CD8-positive, alpha-beta T cell (primary cell): ENCODE measurements at regions of chr6 and their contacts with region 1.

Region 1: GRCh38 chr6:36442671-36443470 is at the starts of genes KCTD20 and PXT1:
- DNase-seq: peak; percentile 66 to 92 (median 86)
- ATAC-seq: peak; percentile 71
- H3K4me3 ChIP-seq: peak within 1 kb of the TSS; percentile 64 to 97
- H3K4me3 Mint-ChIP-seq: peak within 1 kb of the TSS; percentile 97
- H3K27ac ChIP-seq: peak within 1 kb of the TSS; percentile 72 to 90
- H3K27ac Mint-ChIP-seq: peak within 1 kb of the TSS; percentile 99
- H3K4me1 ChIP-seq: peaks cover 31% of the 10 kb centered on the region
- H3K4me1 Mint-ChIP-seq: peaks cover 49% of the 10 kb centered on the region
- H3K27me3 ChIP-seq: no peaks in the 10 kb centered on the region
- H3K27me3 Mint-ChIP-seq: no peaks in the 10 kb centered on the region
- CTCF ChIP-seq: no peak
- total RNA-seq, gene KCTD20: 42.5 to 49.1 TPM
- total RNA-seq, gene PXT1: 0.56 to 0.95 TPM

Region 2: GRCh38 chr6:34791701-34792235 is 1651.1 kb before region 1 on chr6 and contains the start of gene BLTP3A:
- CTCF ChIA-PET with region 1: no interaction called
- POLR2A ChIA-PET with region 1: no interaction called
- intact Hi-C with region 1: loop called in 1 of 2 experiments (anchors 5 kb)
- DNase-seq: peak; percentile 48 to 91 (median 71)
- ATAC-seq: peak; percentile 90
- H3K4me3 ChIP-seq: peak within 1 kb of the TSS; percentile 75 to 95
- H3K4me3 Mint-ChIP-seq: peak within 1 kb of the TSS; percentile 99
- H3K27ac ChIP-seq: peak within 1 kb of the TSS; percentile 75 to 79
- H3K27ac Mint-ChIP-seq: peak within 1 kb of the TSS; percentile 94
- H3K4me1 ChIP-seq: peaks cover 12% of the 10 kb centered on the region
- H3K4me1 Mint-ChIP-seq: peaks cover 29% of the 10 kb centered on the region
- H3K27me3 ChIP-seq: no peaks in the 10 kb centered on the region
- H3K27me3 Mint-ChIP-seq: no peaks in the 10 kb centered on the region
- CTCF ChIP-seq: no peak
- total RNA-seq, gene BLTP3A: 8.8 to 9.3 TPM

Region 3: DNA sequence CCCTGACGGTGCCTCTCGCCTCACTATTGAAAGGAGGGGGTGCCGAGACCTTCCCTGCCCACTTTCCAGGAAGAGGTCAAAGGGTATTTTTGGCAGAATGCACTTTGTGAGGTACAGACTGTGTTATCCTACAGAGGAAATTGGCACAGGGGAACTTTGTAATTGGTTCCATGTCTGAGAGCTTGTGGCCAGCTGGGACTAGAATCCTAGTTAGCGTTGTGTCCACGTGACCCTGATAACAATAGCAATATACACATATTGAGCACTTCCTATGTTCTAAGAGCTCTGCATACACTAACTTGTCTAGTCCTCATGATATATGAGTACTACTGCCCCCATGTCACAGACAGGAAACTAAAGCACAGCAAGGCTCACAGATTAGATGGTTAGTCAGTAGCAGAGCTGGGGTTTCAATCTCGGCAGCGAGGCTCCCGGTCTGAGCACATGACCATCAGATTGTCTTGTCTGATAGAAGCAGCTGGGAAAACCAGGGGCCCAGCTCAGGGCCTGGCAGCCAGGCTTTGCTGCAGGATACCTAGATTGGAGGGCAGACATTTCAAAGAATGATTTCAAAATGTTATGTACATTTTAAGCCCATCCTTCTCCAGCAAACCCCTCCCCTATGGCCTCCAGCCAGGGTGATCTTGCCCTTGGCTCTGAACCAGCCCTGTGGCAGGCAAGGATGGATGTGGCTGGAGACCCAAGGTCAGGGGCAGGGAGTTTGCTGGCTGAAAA is 311.2 kb before region 1 on chr6:
- CTCF ChIA-PET with region 1: no interaction called
- POLR2A ChIA-PET with region 1: no interaction called
- intact Hi-C with region 1: loop called in 1 of 2 experiments (anchors 5 kb)
- DNase-seq: peak in 8 of 9 experiments; percentile 22 to 78 (median 48)
- ATAC-seq: peak; percentile 71
- H3K4me3 ChIP-seq: peak overlapping the region; percentile 79 to 89
- H3K4me3 Mint-ChIP-seq: peak overlapping the region; percentile 88
- H3K27ac ChIP-seq: peak overlapping the region; percentile 81 to 92
- H3K27ac Mint-ChIP-seq: peak overlapping the region; percentile 95
- H3K4me1 ChIP-seq: peaks cover 48% of the 10 kb centered on the region
- H3K4me1 Mint-ChIP-seq: peaks cover 54% of the 10 kb centered on the region
- H3K27me3 ChIP-seq: no peaks in the 10 kb centered on the region
- H3K27me3 Mint-ChIP-seq: no peaks in the 10 kb centered on the region
- CTCF ChIP-seq: no peak

Region 4: DNA sequence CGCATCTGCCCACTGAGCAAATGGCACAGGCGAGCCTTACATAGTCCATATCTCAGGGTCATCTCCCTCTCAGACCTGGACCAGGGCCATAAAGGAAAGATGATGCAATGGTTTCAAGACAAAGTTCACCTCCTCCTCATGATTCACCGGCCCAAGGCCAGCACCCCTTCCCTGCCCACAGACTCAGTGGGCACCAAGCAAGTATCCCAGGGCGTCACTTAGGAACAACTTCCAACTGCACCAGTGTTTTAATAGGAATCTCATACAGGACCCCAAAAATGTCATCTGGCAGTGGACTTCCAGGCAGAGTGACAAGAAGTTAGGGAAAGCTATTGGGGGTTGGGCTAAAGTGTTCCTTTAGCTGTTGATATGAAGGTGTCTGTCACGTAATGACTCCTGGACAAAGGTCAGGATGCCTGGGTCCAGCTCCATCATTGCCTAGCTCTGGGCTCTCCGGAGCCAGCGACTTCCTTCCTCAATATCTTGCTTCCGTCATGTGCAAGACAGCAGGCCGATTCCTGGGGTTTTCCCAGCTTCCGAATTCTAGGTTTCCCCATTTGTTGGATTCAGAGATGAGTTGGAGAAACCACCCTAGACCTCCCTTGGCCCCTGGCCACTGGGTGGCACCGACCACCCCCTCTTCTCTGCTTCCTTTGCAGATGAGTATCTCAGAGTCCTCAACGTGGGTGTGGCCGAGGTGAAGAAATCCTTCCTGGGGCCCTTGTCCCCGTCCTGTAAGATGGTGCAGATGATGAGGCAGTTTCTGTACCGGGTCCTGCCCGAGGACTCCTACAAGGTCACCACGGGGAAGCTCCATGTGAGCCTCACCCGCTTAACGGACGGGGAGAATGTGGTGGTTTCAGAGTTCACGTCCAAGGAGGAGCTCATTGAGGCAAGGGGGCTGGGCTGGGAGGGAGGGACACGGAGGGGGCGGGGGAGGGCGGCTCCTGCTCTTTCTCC is 151.9 kb before region 1 on chr6:
- CTCF ChIA-PET with region 1: no interaction called
- POLR2A ChIA-PET with region 1: no interaction called
- intact Hi-C with region 1: no loop called
- DNase-seq: peak in 1 of 9 experiments; percentile 43
- ATAC-seq: no peak
- H3K4me3 ChIP-seq: no peak overlapping the region
- H3K4me3 Mint-ChIP-seq: no peak overlapping the region
- H3K27ac ChIP-seq: no peak overlapping the region
- H3K27ac Mint-ChIP-seq: no peak overlapping the region
- H3K4me1 ChIP-seq: peaks cover 6% of the 10 kb centered on the region
- H3K4me1 Mint-ChIP-seq: peaks cover 6% of the 10 kb centered on the region
- H3K27me3 ChIP-seq: no peaks in the 10 kb centered on the region
- H3K27me3 Mint-ChIP-seq: peaks cover 7% of the 10 kb centered on the region
- CTCF ChIP-seq: no peak

Region 5: DNA sequence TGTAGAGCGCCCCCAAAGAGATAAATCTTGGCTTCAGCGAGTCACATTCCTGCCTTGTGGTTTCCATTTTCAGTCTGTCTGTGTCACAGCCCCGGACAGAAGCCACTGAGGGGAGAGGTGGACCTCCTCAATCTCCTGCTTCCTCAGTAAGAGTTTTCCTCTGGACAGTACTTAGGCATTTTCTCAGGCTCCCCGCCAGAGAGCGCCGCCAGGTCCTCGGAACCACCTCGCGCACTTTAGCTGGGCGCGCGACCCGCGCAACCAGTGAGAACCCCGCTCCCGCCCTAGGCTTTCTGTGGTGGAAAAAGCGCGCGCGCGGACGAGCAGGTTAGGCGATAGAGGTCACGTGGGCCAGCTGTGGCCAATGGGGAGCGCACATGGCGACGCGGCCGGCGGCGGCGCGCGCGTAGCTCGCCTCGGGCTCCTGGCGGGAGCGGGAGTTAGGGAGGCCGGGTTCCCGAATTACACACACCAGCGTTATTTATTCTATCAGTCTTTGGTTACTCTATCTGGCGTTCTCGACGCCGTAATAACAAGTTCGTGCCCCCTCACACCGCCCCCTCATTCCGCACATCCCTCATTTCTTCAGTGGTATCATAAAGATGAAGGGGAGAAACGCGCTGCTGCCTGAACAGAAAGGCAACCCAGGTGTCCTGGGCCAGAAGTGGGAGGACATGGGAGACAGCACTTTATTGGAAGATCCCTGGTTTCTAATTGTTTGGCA is 19.6 kb before region 1 on chr6:
- CTCF ChIA-PET with region 1: interaction called, 6 read pairs
- POLR2A ChIA-PET with region 1: interaction called, 10 read pairs
- intact Hi-C with region 1: loop called (anchors 1 kb)
- DNase-seq: peak; percentile 96 to 99 (median 98)
- ATAC-seq: peak; percentile 96
- H3K4me3 ChIP-seq: peak overlapping the region; percentile 63 to 74
- H3K4me3 Mint-ChIP-seq: peak overlapping the region; percentile 95
- H3K27ac ChIP-seq: peak overlapping the region; percentile 60 to 80
- H3K27ac Mint-ChIP-seq: peak overlapping the region; percentile 95
- H3K4me1 ChIP-seq: peaks cover 12% of the 10 kb centered on the region
- H3K4me1 Mint-ChIP-seq: peaks cover 11% of the 10 kb centered on the region
- H3K27me3 ChIP-seq: no peaks in the 10 kb centered on the region
- H3K27me3 Mint-ChIP-seq: no peaks in the 10 kb centered on the region
- CTCF ChIP-seq: peak; percentile 74

Region 6: DNA sequence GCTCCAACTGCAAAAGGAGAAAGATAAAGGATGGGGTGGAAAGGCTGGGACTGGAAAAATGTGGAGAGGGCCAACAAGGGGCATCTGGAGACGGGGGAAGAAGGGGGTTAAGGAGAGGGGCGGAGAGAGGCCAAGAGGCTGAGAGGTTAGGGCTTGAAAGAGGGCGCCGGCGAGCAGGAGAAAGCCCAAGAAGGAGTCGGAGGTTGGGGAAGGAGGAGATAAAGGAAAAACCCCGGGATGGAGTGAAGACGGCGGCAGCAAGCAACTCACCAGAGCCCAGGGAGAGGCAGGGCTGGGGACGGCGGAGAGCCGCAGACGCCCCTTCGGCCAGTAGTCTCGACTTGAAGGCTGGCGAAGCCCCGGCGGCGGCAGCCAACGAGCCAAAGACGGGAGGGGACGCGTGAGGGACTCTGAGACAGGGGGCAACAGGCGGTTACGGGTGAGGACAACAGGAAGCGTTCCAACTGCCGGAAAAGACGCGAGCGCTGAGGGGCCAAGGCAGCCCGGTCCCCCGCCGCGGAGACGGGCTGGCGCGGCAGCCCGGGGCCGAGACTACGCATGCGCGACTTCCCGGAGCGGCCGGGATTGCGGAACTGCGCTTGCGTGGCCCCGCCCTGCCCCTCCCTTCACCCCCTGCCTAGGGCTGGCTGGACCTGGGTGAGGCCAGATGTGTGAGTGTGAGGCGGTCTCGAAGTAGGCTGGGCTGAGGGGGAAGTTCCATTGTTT is 104.2 kb after region 1 on chr6 and contains the start of gene STK38:
- CTCF ChIA-PET with region 1: no interaction called
- POLR2A ChIA-PET with region 1: interaction called, 8 read pairs
- intact Hi-C with region 1: loop called (anchors 2 to 5 kb)
- DNase-seq: peak; percentile 85 to 98 (median 94)
- ATAC-seq: peak; percentile 72
- H3K4me3 ChIP-seq: peak within 1 kb of the TSS; percentile 82 to 85
- H3K4me3 Mint-ChIP-seq: peak within 1 kb of the TSS; percentile 99
- H3K27ac ChIP-seq: peak within 1 kb of the TSS; percentile 92 to 94
- H3K27ac Mint-ChIP-seq: peak within 1 kb of the TSS; percentile 99
- H3K4me1 ChIP-seq: peaks cover 32% of the 10 kb centered on the region
- H3K4me1 Mint-ChIP-seq: peaks cover 52% of the 10 kb centered on the region
- H3K27me3 ChIP-seq: no peaks in the 10 kb centered on the region
- H3K27me3 Mint-ChIP-seq: no peaks in the 10 kb centered on the region
- CTCF ChIP-seq: no peak
- total RNA-seq, gene STK38: 37.6 to 38.7 TPM